Naive thymus-derived CD4-positive, alpha-beta T cell (primary cell): ENCODE measurements at regions of chr3 and their contacts with region 1.

Region 1: DNA sequence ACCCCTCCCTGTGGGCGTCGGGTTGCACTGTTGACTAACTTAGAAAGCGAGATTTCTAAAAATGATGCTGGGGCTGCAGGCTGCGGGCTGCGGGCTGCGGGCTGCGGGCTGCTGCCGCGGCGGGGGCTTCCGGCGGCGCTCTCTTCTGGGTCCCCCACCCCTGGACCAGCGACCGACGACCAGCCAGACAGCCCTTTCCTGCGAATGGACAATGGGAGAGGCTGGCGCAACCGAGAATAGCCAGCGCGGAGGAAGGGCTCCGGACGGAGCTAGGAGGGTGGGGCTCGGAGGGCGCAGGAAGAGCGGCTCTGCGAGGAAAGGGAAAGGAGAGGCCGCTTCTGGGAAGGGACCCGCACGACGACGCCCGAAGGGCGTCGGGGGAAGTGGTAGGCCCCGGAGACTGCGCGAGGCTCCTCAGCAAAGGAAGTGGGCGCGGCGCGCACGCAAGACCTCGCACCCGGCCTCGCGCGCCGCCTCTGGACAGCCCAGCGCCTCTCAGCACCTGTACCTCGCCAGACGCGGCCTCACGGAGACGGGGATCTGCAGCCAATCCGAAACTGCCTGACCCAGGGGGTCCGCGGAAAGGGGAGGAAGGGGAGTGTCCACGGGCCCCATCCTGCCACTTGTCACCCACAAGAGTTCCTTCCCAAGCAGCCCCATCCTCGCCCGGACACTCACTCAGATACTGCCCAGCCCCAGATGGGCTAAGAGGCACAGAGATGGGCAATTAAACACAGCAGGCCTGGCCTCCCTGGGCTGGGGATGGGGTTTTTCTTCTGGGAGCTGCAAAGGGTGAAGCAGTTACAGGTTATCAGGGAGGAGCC is 70.7 kb downstream of the SLC12A8 start:
- DNase-seq: peak; percentile 42 to 83 (median 66)
- ATAC-seq: peak; percentile 90
- H3K4me3 ChIP-seq: peak overlapping the region; percentile 49
- H3K4me3 Mint-ChIP-seq: peak overlapping the region; percentile 70 to 85 (median 80)
- H3K27ac ChIP-seq: peak overlapping the region; percentile 51
- H3K27ac Mint-ChIP-seq: peak overlapping the region in 8 of 9 donors; percentile 71 to 94 (median 86)
- H3K4me1 ChIP-seq: peaks cover 12 to 23% of the 10 kb centered on the region in 2 donors
- H3K4me1 Mint-ChIP-seq: peaks cover 20 to 61% (median 33%) of the 10 kb centered on the region in 7 donors
- H3K27me3 ChIP-seq: no peaks in the 10 kb centered on the region
- H3K27me3 Mint-ChIP-seq: peaks cover 0 to 44% (median 0%) of the 10 kb centered on the region in 5 donors

Region 2: DNA sequence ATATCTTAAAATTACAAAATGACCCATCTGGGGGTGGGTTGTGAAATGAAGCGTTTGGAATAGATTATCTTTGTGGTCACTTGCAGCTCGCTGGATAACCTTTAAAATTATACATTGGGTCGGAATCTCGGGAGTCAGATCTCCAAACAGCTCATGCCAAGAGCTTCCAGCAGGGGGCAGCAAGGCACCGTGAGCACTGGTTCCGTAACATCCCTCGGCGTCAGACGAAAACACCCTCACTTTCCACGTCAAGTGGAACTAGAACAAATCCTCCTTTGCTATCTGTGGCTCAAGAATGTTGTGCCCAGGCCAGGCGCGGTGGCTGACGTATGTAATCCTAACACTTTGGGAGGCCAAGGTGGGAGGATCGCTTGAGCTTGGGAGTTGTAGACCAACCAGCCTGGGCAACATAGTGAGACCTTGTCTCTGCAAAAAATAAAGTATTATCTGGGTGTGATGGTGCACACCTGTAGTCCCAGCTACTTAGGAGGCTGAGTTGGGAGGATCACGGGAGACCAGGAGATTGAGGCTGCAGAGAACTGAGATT is 380.5 kb before region 1 on chr3:
- CTCF ChIA-PET with region 1: no interaction called
- POLR2A ChIA-PET with region 1: no interaction called
- intact Hi-C with region 1: loop called in 1 of 2 experiments (anchors 10 kb)
- DNase-seq: peak; percentile 52 to 76 (median 68)
- ATAC-seq: peak; percentile 92
- H3K4me3 ChIP-seq: no peak overlapping the region
- H3K4me3 Mint-ChIP-seq: peak overlapping the region in 9 of 10 donors; percentile 16 to 84 (median 72)
- H3K27ac ChIP-seq: no peak overlapping the region
- H3K27ac Mint-ChIP-seq: peak overlapping the region in 3 of 9 donors; percentile 5 to 92 (median 65)
- H3K4me1 ChIP-seq: no peaks in the 10 kb centered on the region
- H3K4me1 Mint-ChIP-seq: peaks cover 0 to 7% (median 5%) of the 10 kb centered on the region in 7 donors
- H3K27me3 ChIP-seq: no peaks in the 10 kb centered on the region
- H3K27me3 Mint-ChIP-seq: peaks cover 0 to 1% (median 0%) of the 10 kb centered on the region in 5 donors

Region 3: DNA sequence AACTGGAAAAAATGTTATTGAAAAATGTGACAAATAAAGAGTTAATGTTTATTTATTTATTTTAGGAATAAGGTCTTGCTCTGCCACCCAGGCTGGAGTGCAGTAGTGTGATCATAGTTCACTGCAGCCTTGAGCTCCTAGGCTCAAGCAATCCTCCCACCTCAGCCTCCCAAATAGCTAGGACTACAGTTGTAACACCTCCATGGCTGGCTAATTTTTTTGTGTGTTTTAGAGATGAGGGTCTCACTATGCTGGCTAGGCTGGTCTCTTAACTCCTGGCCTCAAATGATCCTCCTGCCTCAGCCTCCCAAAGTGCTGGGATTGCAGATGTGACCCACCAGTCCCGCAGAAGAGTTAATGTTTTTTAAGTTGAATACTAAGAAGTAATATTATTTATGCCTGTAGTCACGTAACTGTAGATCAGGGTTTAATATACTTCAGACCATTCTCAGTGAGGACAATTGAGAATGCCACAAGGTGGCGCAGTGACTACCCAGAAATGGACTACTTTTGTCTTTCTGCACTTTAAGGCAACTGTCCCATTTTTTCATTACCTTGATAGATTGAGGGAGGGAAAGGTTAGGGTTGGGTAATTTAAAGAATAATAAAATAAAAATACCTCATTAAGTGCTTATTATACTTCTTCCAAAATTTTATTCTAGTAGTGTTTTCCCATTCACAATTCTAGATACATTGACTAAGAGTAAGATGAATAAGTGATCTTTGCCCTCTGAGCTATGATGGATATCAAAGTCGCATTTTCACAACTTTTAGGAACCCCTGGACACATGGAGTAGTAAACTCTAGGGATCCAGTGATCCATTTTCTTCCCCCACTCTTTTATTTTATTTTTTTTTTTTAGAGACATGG is 213.2 kb before region 1 on chr3:
- CTCF ChIA-PET with region 1: no interaction called
- POLR2A ChIA-PET with region 1: no interaction called
- intact Hi-C with region 1: loop called in 1 of 2 experiments (anchors 1 kb)
- DNase-seq: peak; percentile 19 to 61 (median 37)
- ATAC-seq: peak; percentile 79
- H3K4me3 ChIP-seq: no peak overlapping the region
- H3K4me3 Mint-ChIP-seq: no peak overlapping the region
- H3K27ac ChIP-seq: no peak overlapping the region
- H3K27ac Mint-ChIP-seq: peak overlapping the region in 2 of 9 donors; percentile 18 to 49
- H3K4me1 ChIP-seq: no peaks in the 10 kb centered on the region
- H3K4me1 Mint-ChIP-seq: peaks cover 0 to 8% (median 0%) of the 10 kb centered on the region in 7 donors
- H3K27me3 ChIP-seq: no peaks in the 10 kb centered on the region
- H3K27me3 Mint-ChIP-seq: peaks cover 0 to 57% (median 11%) of the 10 kb centered on the region in 5 donors

Region 4: DNA sequence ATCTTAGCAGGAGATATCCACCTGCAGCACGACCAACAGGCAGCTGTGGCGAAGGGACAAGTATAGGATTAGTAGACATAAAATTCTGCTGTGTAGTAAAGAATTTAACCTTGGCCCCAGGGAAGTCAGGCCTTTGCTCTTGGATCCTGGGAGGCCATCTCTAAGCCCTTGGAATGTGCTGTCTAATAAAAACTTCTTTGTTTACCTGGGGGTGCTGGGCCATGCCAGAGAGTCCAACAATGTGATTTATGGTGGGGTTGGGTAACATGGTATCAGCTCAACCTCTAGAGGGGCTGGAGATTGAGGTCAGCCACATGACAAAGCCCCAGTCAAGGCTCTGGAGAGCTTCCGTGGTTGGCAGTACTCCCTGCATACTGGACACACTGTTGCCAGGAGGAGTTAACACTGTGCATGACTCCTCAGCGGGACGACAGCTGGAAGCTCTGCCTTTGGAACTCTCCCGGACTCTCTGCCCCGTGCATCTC is 138.4 kb before region 1 on chr3:
- CTCF ChIA-PET with region 1: no interaction called
- POLR2A ChIA-PET with region 1: interaction called, 3 read pairs
- intact Hi-C with region 1: loop called in 1 of 2 experiments (anchors 1 kb)
- DNase-seq: no peak
- ATAC-seq: no peak
- H3K4me3 ChIP-seq: no peak overlapping the region
- H3K4me3 Mint-ChIP-seq: peak overlapping the region in 5 of 10 donors; percentile 17 to 77 (median 43)
- H3K27ac ChIP-seq: peak overlapping the region; percentile 81
- H3K27ac Mint-ChIP-seq: peak overlapping the region in 8 of 9 donors; percentile 92 to 99 (median 96)
- H3K4me1 ChIP-seq: peaks cover 0 to 28% of the 10 kb centered on the region in 2 donors
- H3K4me1 Mint-ChIP-seq: peaks cover 9 to 68% (median 39%) of the 10 kb centered on the region in 7 donors
- H3K27me3 ChIP-seq: no peaks in the 10 kb centered on the region
- H3K27me3 Mint-ChIP-seq: no peaks in the 10 kb centered on the region

Region 5: DNA sequence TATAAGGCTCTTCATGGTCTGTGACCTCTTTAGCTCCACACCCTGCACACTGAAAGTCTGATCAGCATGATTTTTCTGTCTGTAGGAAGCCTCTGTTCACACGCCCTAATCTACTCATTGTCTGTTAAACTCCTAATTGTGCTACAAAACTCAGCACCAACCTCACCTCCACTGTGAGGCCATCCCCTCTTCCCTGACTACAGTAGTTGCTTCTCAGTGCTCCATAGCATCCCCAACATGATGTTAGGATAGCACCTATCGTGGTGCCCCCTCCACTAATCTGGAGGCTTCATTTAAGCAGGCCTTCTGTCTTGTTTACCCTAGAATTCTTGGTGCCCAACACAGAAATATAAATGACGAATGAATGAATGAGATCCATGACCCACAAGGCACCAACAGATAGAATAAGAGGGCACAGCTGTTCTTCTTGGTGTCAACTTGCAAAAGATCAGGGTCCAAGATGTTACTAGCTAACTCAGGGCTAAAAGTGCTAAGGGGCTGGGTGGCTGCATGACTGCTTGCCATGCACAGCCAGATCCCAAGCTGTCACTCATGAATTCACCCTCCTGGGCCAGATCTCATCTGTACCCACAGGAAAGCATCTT is 30.8 kb before region 1 on chr3:
- CTCF ChIA-PET with region 1: no interaction called
- POLR2A ChIA-PET with region 1: no interaction called
- intact Hi-C with region 1: no loop called
- DNase-seq: no peak
- ATAC-seq: no peak
- H3K4me3 ChIP-seq: no peak overlapping the region
- H3K4me3 Mint-ChIP-seq: no peak overlapping the region
- H3K27ac ChIP-seq: no peak overlapping the region
- H3K27ac Mint-ChIP-seq: peak overlapping the region in 1 of 9 donors; percentile 32
- H3K4me1 ChIP-seq: peaks cover 0 to 6% of the 10 kb centered on the region in 2 donors
- H3K4me1 Mint-ChIP-seq: peaks cover 0 to 26% (median 5%) of the 10 kb centered on the region in 7 donors
- H3K27me3 ChIP-seq: no peaks in the 10 kb centered on the region
- H3K27me3 Mint-ChIP-seq: peaks cover 0 to 12% (median 0%) of the 10 kb centered on the region in 5 donors

Region 6: GRCh38 chr3:125129512-125129962 is 12.3 kb before region 1 on chr3:
- CTCF ChIA-PET with region 1: no interaction called
- POLR2A ChIA-PET with region 1: interaction called, 3 read pairs
- intact Hi-C with region 1: loop called in 1 of 2 experiments (anchors 1 kb)
- DNase-seq: no peak
- ATAC-seq: no peak
- H3K4me3 ChIP-seq: no peak overlapping the region
- H3K4me3 Mint-ChIP-seq: no peak overlapping the region
- H3K27ac ChIP-seq: no peak overlapping the region
- H3K27ac Mint-ChIP-seq: no peak overlapping the region
- H3K4me1 ChIP-seq: peaks cover 10 to 11% of the 10 kb centered on the region in 2 donors
- H3K4me1 Mint-ChIP-seq: peaks cover 9 to 53% (median 25%) of the 10 kb centered on the region in 7 donors
- H3K27me3 ChIP-seq: no peaks in the 10 kb centered on the region
- H3K27me3 Mint-ChIP-seq: peaks cover 0 to 26% (median 0%) of the 10 kb centered on the region in 5 donors

Region 7: GRCh38 chr3:125519678-125520589 is 378.1 kb after region 1 on chr3 and contains the start of gene SNX4:
- CTCF ChIA-PET with region 1: no interaction called
- POLR2A ChIA-PET with region 1: interaction called, 3 read pairs
- intact Hi-C with region 1: loop called in 1 of 2 experiments (anchors 10 kb)
- DNase-seq: peak; percentile 70 to 87 (median 82)
- ATAC-seq: peak; percentile 97
- H3K4me3 ChIP-seq: peak within 1 kb of the TSS; percentile 71
- H3K4me3 Mint-ChIP-seq: peak within 1 kb of the TSS; percentile 89 to 98 (median 96)
- H3K27ac ChIP-seq: peak within 1 kb of the TSS; percentile 87
- H3K27ac Mint-ChIP-seq: peak within 1 kb of the TSS; percentile 85 to 96 (median 92)
- H3K4me1 ChIP-seq: peaks cover 0 to 4% of the 10 kb centered on the region in 2 donors
- H3K4me1 Mint-ChIP-seq: peaks cover 20 to 47% (median 37%) of the 10 kb centered on the region in 7 donors
- H3K27me3 ChIP-seq: no peaks in the 10 kb centered on the region
- H3K27me3 Mint-ChIP-seq: peaks cover 0 to 2% (median 0%) of the 10 kb centered on the region in 5 donors
- total RNA-seq, gene SNX4: 19.3 to 31.8 (median 25.2) TPM